ENCODE measurements at regions of chr4 and their contacts with region 1.

Region 1: DNA sequence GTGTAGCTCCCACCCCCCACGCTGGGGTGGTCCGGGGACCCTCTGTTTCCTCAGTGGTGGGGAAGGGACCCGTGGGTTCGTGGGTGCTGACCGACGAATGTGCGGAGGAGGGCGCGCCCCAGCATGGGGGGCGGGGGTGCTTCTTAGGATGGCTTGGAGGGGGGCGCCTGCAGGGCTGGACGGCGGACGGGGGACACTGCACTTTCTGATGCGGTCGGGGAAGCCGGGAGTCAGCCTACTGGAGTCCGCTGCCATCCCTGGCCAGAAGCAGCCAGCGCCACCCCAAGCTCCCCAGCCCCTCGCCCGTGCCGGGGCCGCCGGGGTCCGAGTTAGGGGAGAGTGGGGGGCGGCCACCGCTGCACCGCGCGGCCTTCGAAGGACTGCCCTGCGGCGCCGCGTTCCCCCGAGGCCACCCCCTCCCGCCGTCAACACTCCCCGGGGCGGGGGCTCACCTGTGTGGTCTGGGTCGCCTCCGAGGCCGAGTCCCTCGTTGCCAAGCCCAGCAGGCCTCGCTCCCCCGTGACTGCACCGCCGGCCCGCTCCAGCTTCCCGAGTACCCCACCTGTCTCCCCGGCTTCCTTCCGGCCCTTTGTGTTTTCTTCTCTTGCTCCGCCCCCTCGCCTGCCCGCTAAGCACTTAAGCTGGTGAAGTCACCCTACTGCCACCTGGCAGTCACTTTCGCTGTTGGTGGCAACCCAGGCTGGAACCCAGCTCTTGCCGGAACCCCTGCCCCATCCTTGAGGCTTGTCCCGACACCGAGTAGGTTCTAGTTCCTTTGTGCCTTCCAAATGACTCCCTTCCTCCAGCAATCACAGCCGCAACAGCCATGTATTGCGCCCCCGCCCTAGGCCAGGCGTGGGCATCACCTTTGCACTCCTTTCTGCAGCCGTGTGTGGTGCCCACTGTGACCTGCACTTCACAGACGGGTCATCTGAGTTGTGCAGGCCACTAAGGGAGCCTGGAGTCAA is at the start of gene OCIAD2:
- DNase-seq: peak; percentile 70 to 93 (median 86)
- ATAC-seq: peak; percentile 97
- H3K4me3 ChIP-seq: peak within 1 kb of the TSS; percentile 74
- H3K4me3 Mint-ChIP-seq: peak within 1 kb of the TSS; percentile 92
- H3K27ac ChIP-seq: peak within 1 kb of the TSS; percentile 73 to 82
- H3K27ac Mint-ChIP-seq: peak within 1 kb of the TSS; percentile 92
- H3K4me1 ChIP-seq: peaks cover 40% of the 10 kb centered on the region
- H3K4me1 Mint-ChIP-seq: peaks cover 49% of the 10 kb centered on the region
- H3K27me3 ChIP-seq: no peaks in the 10 kb centered on the region
- H3K27me3 Mint-ChIP-seq: no peaks in the 10 kb centered on the region
- CTCF ChIP-seq: peak; percentile 62
- total RNA-seq, gene OCIAD2: 77.0 to 91.1 TPM

Region 2: DNA sequence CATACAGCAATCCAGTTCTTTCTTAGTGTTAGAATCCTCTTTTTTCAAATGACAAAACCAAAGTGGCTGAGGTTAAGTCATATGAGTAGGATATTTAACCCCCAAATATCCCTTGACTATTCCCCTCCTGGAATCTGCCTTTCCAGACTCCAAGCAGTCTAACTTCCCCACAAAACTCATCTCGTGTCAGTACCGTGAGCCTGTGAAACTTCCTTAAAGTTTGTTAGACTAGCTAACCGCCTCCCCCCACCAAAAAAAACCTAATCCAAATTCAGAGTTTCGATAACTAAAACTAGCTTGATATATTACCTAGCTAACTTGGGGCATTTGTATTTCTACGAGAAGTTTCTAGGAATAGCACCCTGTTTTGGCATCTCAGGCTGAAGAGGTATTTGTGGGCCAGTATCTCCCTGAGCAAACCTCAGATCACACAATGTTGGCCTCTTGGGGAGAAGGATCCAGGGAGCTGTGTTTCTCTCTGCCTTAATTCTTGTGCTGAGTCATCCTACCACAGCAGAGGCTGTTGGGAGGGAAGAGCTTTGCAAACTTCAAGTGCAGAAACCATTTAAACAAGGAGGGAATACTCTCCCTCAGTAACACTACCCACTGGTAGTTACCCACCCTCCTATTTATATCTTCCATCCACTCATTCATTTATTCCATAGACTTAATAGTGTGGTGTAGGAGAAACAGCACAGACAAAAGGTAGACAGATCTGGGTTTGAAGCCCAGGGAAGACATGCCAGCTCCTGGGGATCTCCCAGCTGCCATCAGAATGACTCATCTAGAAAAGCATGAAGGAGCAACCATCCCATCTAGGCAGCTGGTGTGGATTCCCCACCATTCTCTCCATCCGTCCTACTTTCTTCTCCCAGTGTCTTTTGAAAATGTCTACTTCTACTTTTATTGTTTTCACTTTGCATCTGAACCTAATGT is 733.2 kb before region 1 on chr4:
- CTCF ChIA-PET with region 1: no interaction called
- POLR2A ChIA-PET with region 1: no interaction called
- intact Hi-C with region 1: no loop called
- DNase-seq: peak in 2 of 14 experiments; percentile 18 to 20
- ATAC-seq: no peak
- H3K4me3 ChIP-seq: no peak overlapping the region
- H3K4me3 Mint-ChIP-seq: no peak overlapping the region
- H3K27ac ChIP-seq: no peak overlapping the region
- H3K27ac Mint-ChIP-seq: no peak overlapping the region
- H3K4me1 ChIP-seq: no peaks in the 10 kb centered on the region
- H3K4me1 Mint-ChIP-seq: no peaks in the 10 kb centered on the region
- H3K27me3 ChIP-seq: no peaks in the 10 kb centered on the region
- H3K27me3 Mint-ChIP-seq: no peaks in the 10 kb centered on the region
- CTCF ChIP-seq: no peak

Region 3: GRCh38 chr4:48340965-48341775 is 565.3 kb before region 1 on chr4 and contains the start of gene SLAIN2:
- CTCF ChIA-PET with region 1: no interaction called
- POLR2A ChIA-PET with region 1: interaction called, 4 read pairs
- intact Hi-C with region 1: loop called in 1 of 2 experiments (anchors 10 kb)
- DNase-seq: peak; percentile 92 to 100 (median 98)
- ATAC-seq: peak; percentile 81
- H3K4me3 ChIP-seq: peak within 1 kb of the TSS; percentile 82
- H3K4me3 Mint-ChIP-seq: peak within 1 kb of the TSS; percentile 100
- H3K27ac ChIP-seq: peak within 1 kb of the TSS; percentile 91 to 95
- H3K27ac Mint-ChIP-seq: peak within 1 kb of the TSS; percentile 98
- H3K4me1 ChIP-seq: peaks cover 18% of the 10 kb centered on the region
- H3K4me1 Mint-ChIP-seq: peaks cover 54% of the 10 kb centered on the region
- H3K27me3 ChIP-seq: no peaks in the 10 kb centered on the region
- H3K27me3 Mint-ChIP-seq: no peaks in the 10 kb centered on the region
- CTCF ChIP-seq: peak; percentile 36
- total RNA-seq, gene SLAIN2: 46.3 to 47.0 TPM

Region 4: GRCh38 chr4:48830706-48831531 is 75.6 kb before region 1 on chr4 and contains the start of gene OCIAD1:
- CTCF ChIA-PET with region 1: interaction called, 5 read pairs
- POLR2A ChIA-PET with region 1: interaction called, 13 read pairs
- intact Hi-C with region 1: loop called (anchors 2 kb)
- DNase-seq: peak; percentile 82 to 100 (median 91)
- ATAC-seq: peak; percentile 94
- H3K4me3 ChIP-seq: peak within 1 kb of the TSS; percentile 68
- H3K4me3 Mint-ChIP-seq: peak within 1 kb of the TSS; percentile 100
- H3K27ac ChIP-seq: peak within 1 kb of the TSS; percentile 93
- H3K27ac Mint-ChIP-seq: peak within 1 kb of the TSS; percentile 100
- H3K4me1 ChIP-seq: peaks cover 13% of the 10 kb centered on the region
- H3K4me1 Mint-ChIP-seq: peaks cover 32% of the 10 kb centered on the region
- H3K27me3 ChIP-seq: no peaks in the 10 kb centered on the region
- H3K27me3 Mint-ChIP-seq: peaks cover 10% of the 10 kb centered on the region
- CTCF ChIP-seq: no peak
- total RNA-seq, gene OCIAD1: 85.7 to 89.9 TPM

Region 5: DNA sequence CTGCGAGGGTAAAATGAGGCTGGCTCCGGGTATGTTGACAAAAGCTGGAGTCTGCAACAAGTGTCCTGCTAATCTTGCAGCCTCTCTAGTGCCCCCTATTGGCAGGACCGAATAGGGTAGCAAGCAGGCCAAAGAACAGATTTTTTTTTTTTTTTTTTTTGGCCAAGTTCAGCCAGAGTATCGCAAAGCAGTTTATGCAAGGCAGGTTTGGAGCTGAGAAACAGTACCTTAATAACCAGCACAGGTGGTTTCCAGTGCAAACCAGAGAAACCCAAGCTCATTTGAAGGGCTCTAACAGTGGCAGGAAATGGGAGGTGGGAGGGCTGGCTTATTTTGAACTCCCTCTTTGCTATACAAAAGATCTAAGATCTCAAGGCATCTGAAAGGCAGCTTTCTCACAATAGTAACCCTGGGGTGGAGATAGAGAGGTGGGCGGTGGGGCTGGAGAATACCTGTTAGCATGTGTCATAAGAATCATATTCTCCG is 38.3 kb after region 1 on chr4:
- CTCF ChIA-PET with region 1: no interaction called
- POLR2A ChIA-PET with region 1: interaction called, 3 read pairs
- intact Hi-C with region 1: loop called in 1 of 2 experiments (anchors 5 kb)
- DNase-seq: peak in 11 of 14 experiments; percentile 6 to 67 (median 19)
- ATAC-seq: peak; percentile 88
- H3K4me3 ChIP-seq: no peak overlapping the region
- H3K4me3 Mint-ChIP-seq: peak overlapping the region; percentile 70
- H3K27ac ChIP-seq: no peak overlapping the region
- H3K27ac Mint-ChIP-seq: peak overlapping the region; percentile 60
- H3K4me1 ChIP-seq: peaks cover 14% of the 10 kb centered on the region
- H3K4me1 Mint-ChIP-seq: peaks cover 47% of the 10 kb centered on the region
- H3K27me3 ChIP-seq: peaks cover 0 to 2% of the 10 kb centered on the region in 2 experiments
- H3K27me3 Mint-ChIP-seq: no peaks in the 10 kb centered on the region
- CTCF ChIP-seq: peak; percentile 55

Measured in CD4-positive, alpha-beta T cell (primary cell).